ENCODE measurements at regions of chr5 and their contacts with region 1.

Region 1: DNA sequence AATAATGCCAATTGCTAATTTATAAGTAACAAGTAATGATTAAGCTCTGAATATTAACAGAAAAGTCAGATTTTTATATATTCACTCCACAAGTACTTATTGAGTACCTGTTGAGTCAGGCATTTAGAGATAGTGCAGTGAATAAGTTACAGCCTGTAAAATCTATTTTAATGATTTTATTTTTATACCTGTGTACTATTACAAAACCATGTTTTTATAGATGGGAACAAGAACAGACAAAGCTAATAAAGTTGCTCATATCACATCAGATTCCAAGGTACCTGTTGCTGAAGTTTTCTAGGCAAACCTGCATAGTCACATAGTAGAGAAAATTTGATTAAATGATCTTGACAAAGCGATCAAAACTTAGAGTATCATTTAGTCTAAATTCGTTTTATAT is 623.7 kb downstream of the EFNA5 start:
- DNase-seq: no peak
- H3K4me3 ChIP-seq: no peak overlapping the region
- H3K27ac ChIP-seq: no peak overlapping the region
- H3K4me1 ChIP-seq: no peaks in the 10 kb centered on the region
- H3K27me3 ChIP-seq: no peaks in the 10 kb centered on the region
- CTCF ChIP-seq: no peak
- POLR2A ChIP-seq: no peak

Region 2: GRCh38 chr5:106397700-106398099 is 649.3 kb before region 1 on chr5:
- intact Hi-C with region 1: no loop called
- DNase-seq: peak in 1 of 2 donors; percentile 27
- H3K4me3 ChIP-seq: no peak overlapping the region
- H3K27ac ChIP-seq: peak overlapping the region; percentile 53 to 67
- H3K4me1 ChIP-seq: no peaks in the 10 kb centered on the region
- H3K27me3 ChIP-seq: no peaks in the 10 kb centered on the region
- CTCF ChIP-seq: no peak
- POLR2A ChIP-seq: no peak

Region 3: DNA sequence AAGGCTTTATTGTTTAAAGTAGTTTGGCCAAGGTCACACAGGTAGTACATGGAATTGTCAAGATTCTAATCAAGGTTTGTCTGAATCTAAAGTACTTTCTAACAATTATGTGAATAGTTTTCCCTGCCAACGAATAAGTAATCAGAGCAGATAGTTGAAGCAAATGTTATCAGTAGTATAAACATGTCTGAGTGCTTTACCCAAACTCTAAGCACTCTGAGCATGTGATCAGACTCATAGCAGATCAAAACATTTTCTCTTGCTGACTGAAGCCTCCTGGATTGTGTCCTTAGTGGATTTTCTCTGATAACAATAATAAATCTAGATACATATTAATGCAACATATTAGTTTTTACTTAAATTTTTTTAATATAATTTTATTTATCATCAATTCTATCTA is 371.4 kb before region 1 on chr5:
- intact Hi-C with region 1: loop called (anchors 5 kb)
- DNase-seq: no peak
- H3K4me3 ChIP-seq: no peak overlapping the region
- H3K27ac ChIP-seq: no peak overlapping the region
- H3K4me1 ChIP-seq: no peaks in the 10 kb centered on the region
- H3K27me3 ChIP-seq: no peaks in the 10 kb centered on the region
- CTCF ChIP-seq: no peak
- POLR2A ChIP-seq: no peak

Measured in breast epithelium (tissue), 4 donors.